ENCODE measurements at regions of chr1 and their contacts with region 1.

Region 1: GRCh38 chr1:156388174-156389137 is 19.4 kb downstream of the RHBG start:
- DNase-seq: no peak
- H3K4me3 ChIP-seq: no peak overlapping the region
- H3K27ac ChIP-seq: no peak overlapping the region
- H3K4me1 ChIP-seq: no peaks in the 10 kb centered on the region
- H3K27me3 ChIP-seq: peaks cover 29% of the 10 kb centered on the region
- CTCF ChIP-seq: no peak
- POLR2A ChIP-seq: no peak

Region 2: GRCh38 chr1:156226116-156226538 is 162.3 kb before region 1 on chr1:
- intact Hi-C with region 1: no loop called
- DNase-seq: no peak
- H3K4me3 ChIP-seq: no peak overlapping the region
- H3K27ac ChIP-seq: no peak overlapping the region
- H3K4me1 ChIP-seq: no peaks in the 10 kb centered on the region
- H3K27me3 ChIP-seq: no peaks in the 10 kb centered on the region
- CTCF ChIP-seq: no peak
- POLR2A ChIP-seq: no peak

Region 3: DNA sequence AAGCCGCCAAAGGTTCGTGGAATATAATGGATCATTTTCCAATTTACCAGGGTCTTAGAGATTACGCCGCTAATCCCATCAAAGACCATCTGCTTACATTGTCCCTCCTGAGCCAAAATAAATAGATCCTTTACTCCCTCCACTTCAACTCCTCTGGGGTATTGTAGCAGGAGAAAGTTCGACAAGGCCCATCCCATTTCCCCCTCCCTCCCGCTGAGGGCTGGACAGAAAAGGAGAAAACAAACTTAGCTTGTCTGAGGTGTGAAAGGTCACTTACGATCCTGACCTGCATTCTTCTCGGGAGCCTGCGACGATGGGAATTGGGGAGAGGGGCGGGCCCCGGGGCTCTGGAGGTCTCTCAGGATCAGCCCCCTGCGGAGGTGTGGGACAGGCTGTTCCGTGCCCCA is 51.3 kb after region 1 on chr1:
- intact Hi-C with region 1: loop called (anchors 2 kb)
- DNase-seq: no peak
- H3K4me3 ChIP-seq: no peak overlapping the region
- H3K27ac ChIP-seq: no peak overlapping the region
- H3K4me1 ChIP-seq: peaks cover 7 to 15% of the 10 kb centered on the region in 2 donors
- H3K27me3 ChIP-seq: peaks cover 93% of the 10 kb centered on the region
- CTCF ChIP-seq: no peak
- POLR2A ChIP-seq: no peak

Measured in adrenal gland (tissue), 19 donors.